ENCODE measurements at regions of chr22 and their contacts with region 1.

Region 1: DNA sequence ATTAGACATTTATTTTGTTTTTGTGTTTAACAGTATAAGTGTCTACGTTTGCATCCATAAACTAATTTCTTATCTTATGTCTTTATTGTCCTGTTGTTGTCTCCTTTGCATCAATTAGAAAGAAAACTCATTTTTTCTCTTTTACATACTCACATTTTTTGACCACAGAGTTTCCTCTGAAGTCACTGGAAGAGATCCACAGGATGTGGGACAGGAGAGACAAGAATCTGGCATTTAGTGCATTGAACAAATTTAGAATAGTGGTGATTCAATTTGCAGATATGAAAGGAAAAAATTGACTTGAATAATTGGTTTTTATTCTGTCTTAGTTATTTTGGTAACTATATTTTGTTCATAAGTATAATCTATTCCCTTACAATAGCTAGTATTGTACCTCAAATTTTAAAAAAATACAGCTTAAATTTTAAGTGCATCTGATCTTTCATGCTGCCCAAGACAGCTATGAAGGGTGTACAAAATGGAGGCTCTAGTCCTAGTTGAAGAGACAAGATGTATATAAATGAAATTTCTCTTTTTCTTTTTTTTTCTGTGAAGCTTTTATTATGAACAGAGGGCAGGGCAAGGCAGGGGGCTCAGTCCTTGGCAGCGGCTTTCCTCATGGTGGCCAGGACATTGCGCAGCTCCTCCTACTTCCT is 24.4 kb downstream of the HORMAD2 start:
- DNase-seq: no peak
- H3K4me3 ChIP-seq: no peak overlapping the region
- H3K27ac ChIP-seq: no peak overlapping the region
- H3K4me1 ChIP-seq: no peaks in the 10 kb centered on the region
- H3K27me3 ChIP-seq: peaks cover 52% of the 10 kb centered on the region
- CTCF ChIP-seq: no peak

Region 2: DNA sequence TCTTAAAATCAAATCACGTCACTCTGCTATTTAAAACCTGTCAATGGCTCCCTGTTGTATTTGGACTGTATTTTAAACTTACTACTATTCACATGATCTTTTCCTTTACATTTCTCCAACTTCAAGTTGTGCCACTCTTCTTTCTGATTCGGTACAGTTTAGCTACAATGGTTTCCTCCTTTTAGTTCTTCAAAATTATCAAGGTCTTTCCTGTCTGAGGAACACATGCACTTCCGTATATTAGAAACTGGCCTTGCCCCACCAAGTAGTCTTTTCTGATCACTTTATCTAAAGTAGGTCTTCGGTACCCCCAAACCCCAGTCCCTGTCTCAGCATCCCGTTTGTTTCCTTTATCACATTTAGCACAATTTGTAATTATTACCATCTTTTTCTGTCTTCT is 139.9 kb before region 1 on chr22:
- intact Hi-C with region 1: no loop called
- DNase-seq: no peak
- H3K4me3 ChIP-seq: no peak overlapping the region
- H3K27ac ChIP-seq: no peak overlapping the region
- H3K4me1 ChIP-seq: peaks cover 12% of the 10 kb centered on the region
- H3K27me3 ChIP-seq: no peaks in the 10 kb centered on the region
- CTCF ChIP-seq: no peak

Region 3: DNA sequence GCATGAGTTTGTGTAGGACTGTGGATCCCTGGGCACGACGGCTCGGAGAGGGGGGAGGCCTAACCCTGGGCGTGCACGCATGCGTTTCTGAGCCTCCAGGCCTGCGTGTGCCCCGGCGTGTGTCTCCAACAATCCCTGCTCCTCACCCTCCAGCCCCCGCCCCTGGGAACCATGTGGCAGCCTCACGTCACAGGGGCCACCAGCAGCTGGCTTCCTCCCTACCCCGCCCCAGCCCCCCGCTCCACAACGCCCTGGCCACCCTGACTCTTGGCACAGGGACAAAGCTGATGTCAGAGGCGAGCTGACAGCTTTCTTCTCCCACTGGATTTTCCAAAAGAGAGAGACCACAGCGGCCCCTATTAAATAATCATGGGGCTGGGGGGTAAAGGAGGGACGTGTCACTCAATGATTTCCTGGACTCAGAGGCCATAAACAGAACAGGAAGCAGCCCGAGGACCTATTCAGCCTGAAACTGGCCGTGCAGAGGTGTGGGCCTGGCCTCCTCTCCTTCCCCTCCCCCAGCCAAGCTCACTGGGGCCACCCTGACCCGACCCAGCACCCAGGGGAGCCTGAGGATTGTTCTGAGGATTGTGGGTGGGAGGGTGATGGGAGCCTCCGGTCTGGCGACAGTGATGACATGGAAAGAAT is 148.7 kb after region 1 on chr22:
- intact Hi-C with region 1: loop called (anchors 2 kb)
- DNase-seq: peak; percentile 78
- H3K4me3 ChIP-seq: peak overlapping the region; percentile 9
- H3K27ac ChIP-seq: peak overlapping the region; percentile 45
- H3K4me1 ChIP-seq: peaks cover 37% of the 10 kb centered on the region
- H3K27me3 ChIP-seq: peaks cover 61% of the 10 kb centered on the region
- CTCF ChIP-seq: no peak

Region 4: DNA sequence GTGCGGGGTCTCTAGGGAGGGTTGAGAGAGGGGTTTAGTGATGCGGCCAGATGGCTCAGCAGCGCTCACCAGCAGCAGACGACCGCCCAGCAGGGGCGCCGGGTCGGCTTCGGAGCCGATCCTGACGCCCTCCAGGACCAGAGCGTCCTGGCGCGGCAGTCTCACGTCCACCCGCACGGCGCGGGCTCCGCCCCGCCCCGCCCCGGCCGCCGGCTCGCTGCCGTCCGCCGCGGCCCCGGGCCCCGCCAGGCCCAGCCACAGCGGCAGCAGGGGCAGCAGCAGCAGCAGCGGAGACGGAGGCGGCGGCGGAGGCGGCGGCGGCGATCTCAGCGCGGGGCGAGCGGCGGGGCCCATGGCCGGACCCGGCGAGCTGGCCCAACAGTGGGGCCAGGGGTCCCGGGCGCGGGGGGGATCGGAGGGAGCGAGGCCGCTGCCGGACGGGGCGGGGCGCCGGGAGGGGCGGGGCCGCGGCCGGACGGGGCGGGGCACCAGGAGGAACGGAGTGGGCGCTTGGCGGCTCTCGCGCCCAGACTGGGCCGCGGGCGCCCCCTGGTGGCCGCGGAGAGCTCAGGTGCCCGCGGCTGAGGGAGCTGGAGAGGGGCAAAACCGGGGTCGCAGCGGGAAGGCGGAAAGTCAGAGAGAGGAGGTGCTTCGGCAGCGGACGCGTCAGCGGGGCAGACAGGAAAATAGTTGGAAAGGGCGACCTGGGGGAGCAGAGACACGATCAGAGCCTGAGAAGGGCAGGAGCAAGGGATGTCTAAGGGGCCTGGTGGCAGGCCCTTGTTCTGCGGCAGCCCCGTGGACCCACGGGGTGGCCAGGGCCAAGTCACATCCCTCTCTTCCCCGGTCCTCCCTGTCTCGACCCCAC is 282.6 kb after region 1 on chr22 and contains the start of gene RNF215:
- intact Hi-C with region 1: loop called (anchors 5 kb)
- DNase-seq: peak; percentile 84
- H3K4me3 ChIP-seq: peak within 1 kb of the TSS; percentile 73
- H3K27ac ChIP-seq: peak within 1 kb of the TSS; percentile 85
- H3K4me1 ChIP-seq: peaks cover 22% of the 10 kb centered on the region
- H3K27me3 ChIP-seq: peaks cover under 1% of the 10 kb centered on the region
- CTCF ChIP-seq: peak; percentile 95
- total RNA-seq, gene RNF215: 4.9 TPM

Measured in left ventricle myocardium inferior (tissue), 1 donor.